ENCODE measurements at regions of chr5 and their contacts with region 1.

Region 1: DNA sequence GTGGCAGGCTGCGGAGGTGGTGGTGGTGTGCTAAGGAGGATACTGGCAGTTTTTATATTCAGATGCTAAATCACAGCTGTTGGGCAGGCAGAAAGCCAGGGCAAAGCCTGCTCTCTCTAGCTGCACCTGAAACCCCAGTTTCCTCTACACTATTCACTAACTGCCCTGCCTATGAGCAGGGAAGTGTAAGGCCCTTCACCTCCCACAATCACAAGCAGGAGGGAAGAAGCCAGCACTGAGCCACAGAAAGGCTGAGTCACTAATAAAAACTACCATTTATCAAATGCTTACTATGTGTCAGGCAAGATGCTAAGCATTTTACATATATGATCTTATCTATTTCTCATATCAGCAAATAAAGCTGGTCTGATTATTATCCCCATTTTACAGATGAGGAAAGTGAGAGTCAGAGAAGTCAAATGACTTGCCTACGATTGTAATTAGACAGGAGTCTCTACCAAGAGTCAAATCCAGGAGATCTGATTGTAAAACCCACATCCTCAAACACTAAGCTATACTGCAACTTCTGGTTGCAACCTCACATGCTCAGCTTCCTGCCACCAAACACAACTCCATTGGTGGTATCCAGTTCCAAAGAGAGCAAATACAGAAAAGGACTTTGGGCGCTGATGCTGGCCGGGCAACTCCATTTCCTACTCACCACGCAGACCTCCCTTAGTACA is 17.7 kb upstream of the IL6ST start:
- DNase-seq: peak; percentile 57
- H3K4me3 Mint-ChIP-seq: peak overlapping the region; percentile 19
- H3K27ac Mint-ChIP-seq: peak overlapping the region; percentile 86
- H3K4me1 Mint-ChIP-seq: peaks cover 29% of the 10 kb centered on the region
- H3K27me3 Mint-ChIP-seq: peaks cover 5% of the 10 kb centered on the region

Region 2: GRCh38 chr5:55973296-55973695 is 39.1 kb before region 1 on chr5:
- intact Hi-C with region 1: no loop called
- DNase-seq: no peak
- H3K4me3 Mint-ChIP-seq: no peak overlapping the region
- H3K27ac Mint-ChIP-seq: no peak overlapping the region
- H3K4me1 Mint-ChIP-seq: peaks cover 41% of the 10 kb centered on the region
- H3K27me3 Mint-ChIP-seq: no peaks in the 10 kb centered on the region

Region 3: DNA sequence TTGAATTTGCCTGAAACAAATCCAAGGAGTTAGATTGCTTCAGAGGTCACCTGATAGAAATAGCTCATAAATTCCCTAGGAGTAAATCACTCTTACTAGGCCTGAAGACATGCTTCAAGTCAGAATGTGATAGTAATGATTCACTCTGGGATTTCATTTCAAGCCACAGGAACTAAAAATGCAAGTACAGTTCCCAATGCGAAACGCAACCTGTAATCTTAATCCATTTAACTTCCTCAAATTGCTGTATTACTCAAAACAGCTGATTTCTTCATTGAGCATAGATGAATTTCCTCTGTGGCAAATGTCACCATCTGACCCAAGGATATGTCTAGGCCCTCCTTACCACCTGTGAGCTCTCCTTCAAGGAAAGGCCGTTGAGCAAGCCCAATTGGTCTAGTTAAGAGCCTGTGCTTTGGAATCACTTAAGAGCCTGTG is 14.5 kb after region 1 on chr5:
- intact Hi-C with region 1: loop called (anchors 1 kb)
- DNase-seq: no peak
- H3K4me3 Mint-ChIP-seq: no peak overlapping the region
- H3K27ac Mint-ChIP-seq: no peak overlapping the region
- H3K4me1 Mint-ChIP-seq: peaks cover 22% of the 10 kb centered on the region
- H3K27me3 Mint-ChIP-seq: peaks cover 39% of the 10 kb centered on the region

Measured in activated T-helper 2 cell treated with anti-CD3 and anti-CD28 coated beads, Interferon-gamma antibody, Interleukin-2, Interleukin-4, amounts not matched to agents 10 μg/mL and 5 μg/mL and 100 μg/mL, durations not matched to agents 14 hours and 24 hours and 36 hours (primary cell).